PC-3 (cell line): ENCODE measurements at regions of chr9 and their contacts with region 1.

Region 1: GRCh38 chr9:78539904-78540303 is 243.0 kb downstream of the PSAT1 start:
- DNase-seq: peak; percentile 91
- ATAC-seq: peak; percentile 93
- H3K4me3 ChIP-seq: no peak overlapping the region
- H3K27ac ChIP-seq: peak overlapping the region; percentile 40
- H3K4me1 ChIP-seq: peaks cover 25% of the 10 kb centered on the region
- H3K27me3 ChIP-seq: no peaks in the 10 kb centered on the region
- CTCF ChIP-seq: no peak

Region 2: DNA sequence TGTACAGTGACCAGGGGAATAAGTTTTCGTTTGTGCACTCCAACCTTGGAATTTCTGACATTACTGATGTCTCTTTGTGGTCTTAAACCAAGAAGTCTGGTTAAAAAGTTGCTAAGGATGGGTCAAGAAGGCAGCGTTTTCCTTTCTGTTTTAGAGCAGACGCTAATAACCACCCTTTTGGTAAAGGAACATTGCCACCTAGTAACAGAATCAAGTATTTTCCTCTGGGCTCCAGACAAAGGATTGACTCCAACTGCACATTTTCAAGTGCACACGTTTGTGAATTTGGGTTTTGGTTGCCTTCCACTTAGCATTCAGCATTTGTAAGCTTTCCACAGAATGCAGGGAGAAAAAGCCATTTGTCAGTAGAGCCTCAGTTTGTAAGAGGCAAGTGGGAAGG is 326.2 kb before region 1 on chr9:
- CTCF ChIA-PET with region 1: no interaction called
- POLR2A ChIA-PET with region 1: no interaction called
- intact Hi-C with region 1: no loop called
- DNase-seq: peak; percentile 18
- ATAC-seq: no peak
- H3K4me3 ChIP-seq: no peak overlapping the region
- H3K27ac ChIP-seq: no peak overlapping the region
- H3K4me1 ChIP-seq: no peaks in the 10 kb centered on the region
- H3K27me3 ChIP-seq: no peaks in the 10 kb centered on the region
- CTCF ChIP-seq: peak; percentile 44

Region 3: DNA sequence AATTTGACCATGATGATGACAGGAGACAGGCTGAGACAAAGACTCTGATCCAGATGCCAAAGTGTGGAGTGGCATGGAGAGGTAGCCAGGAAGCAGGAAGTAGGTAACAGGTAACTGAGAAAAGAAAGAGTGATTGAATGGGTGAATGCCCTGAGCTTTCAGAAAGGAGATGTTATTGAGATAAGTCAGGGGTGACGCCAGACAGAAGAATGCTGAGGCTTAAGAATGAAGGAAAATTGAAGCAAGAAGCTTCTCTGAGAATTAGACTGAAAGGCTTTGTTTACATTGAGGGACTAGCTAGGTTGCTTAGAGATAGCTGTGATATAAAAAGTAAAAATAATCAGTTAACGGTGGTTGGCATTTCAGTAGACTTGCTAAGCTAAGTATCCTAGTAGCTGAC is 77.3 kb before region 1 on chr9:
- CTCF ChIA-PET with region 1: no interaction called
- POLR2A ChIA-PET with region 1: no interaction called
- intact Hi-C with region 1: loop called (anchors 5 kb)
- DNase-seq: peak; percentile 51
- ATAC-seq: peak; percentile 38
- H3K4me3 ChIP-seq: no peak overlapping the region
- H3K27ac ChIP-seq: no peak overlapping the region
- H3K4me1 ChIP-seq: no peaks in the 10 kb centered on the region
- H3K27me3 ChIP-seq: no peaks in the 10 kb centered on the region
- CTCF ChIP-seq: no peak